Right lobe of liver (tissue), 6 donors: ENCODE measurements at regions of chr2 and their contacts with region 1.

Region 1: GRCh38 chr2:206981739-206982340 is 42.5 kb downstream of the CPO start:
- DNase-seq: peak; percentile 63 to 70 (median 67)
- ATAC-seq: peak; percentile 78 to 94 (median 92)
- H3K4me3 ChIP-seq: no peak overlapping the region
- H3K27ac ChIP-seq: no peak overlapping the region
- H3K4me1 ChIP-seq: peaks cover 0 to 5% (median 0%) of the 10 kb centered on the region in 4 donors
- H3K27me3 ChIP-seq: no peaks in the 10 kb centered on the region
- CTCF ChIP-seq: peak; percentile 58 to 78 (median 67)
- POLR2A ChIP-seq: no peak

Region 2: DNA sequence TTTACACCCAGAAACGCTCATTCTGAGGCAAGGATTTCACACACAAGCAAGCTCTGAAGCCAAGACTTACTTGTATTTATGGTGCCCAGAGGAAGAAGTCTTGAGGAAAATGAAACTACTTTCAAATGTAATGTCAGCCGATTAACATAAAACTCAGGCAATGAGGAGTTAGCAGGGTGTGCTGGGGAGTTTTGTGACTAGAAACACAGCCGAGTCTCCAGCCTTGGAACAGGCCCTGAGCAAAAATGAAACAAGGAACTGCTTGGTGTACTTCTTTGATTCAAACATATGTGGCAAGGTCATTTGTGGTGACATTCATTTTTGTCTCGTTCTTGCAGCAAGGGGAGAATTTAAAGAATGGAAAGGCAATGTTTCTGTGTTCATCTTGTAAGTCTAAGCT is 268.1 kb before region 1 on chr2:
- intact Hi-C with region 1: no loop called
- DNase-seq: no peak
- ATAC-seq: peak in 2 of 4 donors; percentile 27 to 37
- H3K4me3 ChIP-seq: no peak overlapping the region
- H3K27ac ChIP-seq: no peak overlapping the region
- H3K4me1 ChIP-seq: no peaks in the 10 kb centered on the region
- H3K27me3 ChIP-seq: no peaks in the 10 kb centered on the region
- CTCF ChIP-seq: no peak
- POLR2A ChIP-seq: no peak

Region 3: DNA sequence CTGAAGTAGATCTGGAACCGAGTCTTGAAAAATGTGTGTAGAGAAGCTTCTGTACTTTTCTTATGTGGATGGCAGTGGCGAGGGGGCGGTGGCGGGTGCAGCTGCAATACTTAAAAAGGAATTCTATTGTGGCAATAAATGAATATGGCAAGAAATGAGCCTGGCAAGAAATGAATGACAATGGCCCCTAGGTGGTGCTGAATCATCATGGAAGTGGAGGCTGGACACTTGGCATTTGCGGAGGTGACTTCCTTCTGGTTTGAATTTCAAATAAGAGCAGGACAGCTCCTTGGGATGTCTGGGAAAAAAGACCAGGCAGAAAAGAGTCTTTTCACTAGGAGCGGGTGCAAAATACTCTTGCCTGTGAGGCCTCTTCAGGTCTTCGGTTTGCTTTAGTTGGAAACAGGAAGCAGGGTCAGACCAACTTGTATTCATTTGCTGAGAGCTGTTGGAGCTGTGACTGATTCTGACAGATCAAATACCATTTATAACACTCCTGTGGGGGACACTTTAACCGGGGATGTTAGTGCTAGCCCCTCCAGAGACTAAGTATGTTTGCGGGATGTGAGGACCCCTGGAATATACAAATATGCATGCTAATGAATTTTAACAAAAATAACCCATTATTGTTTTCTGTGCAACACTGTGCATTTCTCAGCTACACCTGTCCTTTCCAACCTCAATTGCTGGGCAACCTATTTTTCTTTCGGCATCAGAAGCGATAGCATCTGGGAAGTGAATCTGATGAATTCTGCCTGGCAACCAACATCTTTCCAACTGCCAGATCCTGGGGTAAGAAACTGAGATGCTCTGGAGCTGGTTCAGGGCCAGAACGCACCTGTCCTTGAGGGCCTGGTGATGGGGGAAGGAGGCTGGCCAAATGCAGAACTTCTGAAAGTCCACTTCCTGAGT is 181.1 kb before region 1 on chr2:
- intact Hi-C with region 1: loop called in 1 of 2 experiments (anchors 10 kb)
- DNase-seq: peak in 2 of 3 donors; percentile 26 to 60
- ATAC-seq: peak; percentile 84 to 89 (median 86)
- H3K4me3 ChIP-seq: no peak overlapping the region
- H3K27ac ChIP-seq: no peak overlapping the region
- H3K4me1 ChIP-seq: no peaks in the 10 kb centered on the region
- H3K27me3 ChIP-seq: no peaks in the 10 kb centered on the region
- CTCF ChIP-seq: peak; percentile 67 to 72 (median 70)
- POLR2A ChIP-seq: no peak

Region 4: DNA sequence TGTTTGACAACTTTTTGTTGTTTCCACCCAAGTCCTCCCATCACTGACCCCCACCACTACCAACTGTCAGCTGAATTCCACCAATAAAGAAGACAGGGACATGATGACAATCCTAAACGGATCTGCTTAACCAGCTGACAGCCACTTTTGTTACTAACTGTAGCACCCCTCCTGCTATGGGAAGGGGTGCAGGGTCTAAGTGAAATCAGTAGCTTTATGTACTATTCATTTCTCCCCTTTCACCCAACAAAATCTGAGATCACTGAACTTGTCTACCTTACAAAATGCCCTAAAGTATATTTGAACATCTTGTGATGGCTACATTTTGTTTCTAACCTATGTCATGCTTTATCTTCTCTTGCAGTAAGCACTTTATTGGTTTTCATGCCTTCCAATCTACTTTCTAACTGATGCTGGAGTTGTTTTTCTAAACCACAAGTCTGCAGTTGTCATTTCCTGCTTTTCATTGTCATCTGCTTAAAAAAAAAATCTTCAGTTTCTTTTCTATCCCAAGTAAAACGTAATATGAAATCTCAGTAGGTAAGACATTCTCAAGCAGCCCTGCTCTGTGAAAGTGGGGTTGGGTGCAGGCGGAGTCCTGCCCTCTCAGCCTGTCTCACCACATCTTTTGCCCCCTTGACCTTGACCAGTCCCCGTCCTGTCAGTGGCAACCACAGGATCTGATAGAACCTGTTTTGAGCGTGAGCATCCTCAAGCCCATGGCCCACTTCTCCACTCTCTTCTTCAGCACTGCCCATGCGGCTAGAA is 122.7 kb before region 1 on chr2:
- intact Hi-C with region 1: no loop called
- DNase-seq: no peak
- ATAC-seq: no peak
- H3K4me3 ChIP-seq: no peak overlapping the region
- H3K27ac ChIP-seq: no peak overlapping the region
- H3K4me1 ChIP-seq: no peaks in the 10 kb centered on the region
- H3K27me3 ChIP-seq: no peaks in the 10 kb centered on the region
- CTCF ChIP-seq: no peak
- POLR2A ChIP-seq: no peak

Region 5: DNA sequence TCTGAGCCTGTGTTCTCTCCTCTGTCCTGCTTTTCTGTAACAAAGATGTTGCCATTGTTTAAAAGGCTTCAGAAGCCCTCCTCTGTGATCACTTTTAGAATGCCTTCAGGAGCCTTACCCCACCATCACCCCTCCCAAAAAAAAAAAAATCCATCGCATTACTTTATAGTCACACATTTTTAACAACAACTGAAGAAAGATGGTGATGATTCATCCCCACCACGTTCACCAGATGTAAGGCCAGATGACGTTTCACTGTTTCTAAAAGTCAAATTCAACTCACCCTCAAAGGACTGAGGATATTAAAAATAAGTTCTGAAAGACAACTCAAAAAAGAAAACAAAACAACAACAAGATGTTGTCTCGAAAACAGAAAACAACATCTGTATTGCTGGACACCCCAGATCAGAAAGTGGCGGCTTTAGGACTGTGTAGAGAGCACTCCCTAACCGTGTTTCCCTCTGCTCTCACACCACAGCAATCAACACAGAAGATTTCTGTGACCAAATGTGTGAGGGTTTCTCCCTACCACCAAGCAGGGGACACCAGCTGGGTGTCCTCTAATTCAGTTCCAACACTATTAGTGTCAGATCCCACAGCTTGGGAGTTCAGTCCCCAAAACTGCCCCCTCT is 486.0 kb after region 1 on chr2:
- intact Hi-C with region 1: loop called (anchors 5 to 10 kb)
- DNase-seq: no peak
- ATAC-seq: no peak
- H3K4me3 ChIP-seq: no peak overlapping the region
- H3K27ac ChIP-seq: no peak overlapping the region
- H3K4me1 ChIP-seq: no peaks in the 10 kb centered on the region
- H3K27me3 ChIP-seq: no peaks in the 10 kb centered on the region
- CTCF ChIP-seq: no peak
- POLR2A ChIP-seq: no peak

Region 6: DNA sequence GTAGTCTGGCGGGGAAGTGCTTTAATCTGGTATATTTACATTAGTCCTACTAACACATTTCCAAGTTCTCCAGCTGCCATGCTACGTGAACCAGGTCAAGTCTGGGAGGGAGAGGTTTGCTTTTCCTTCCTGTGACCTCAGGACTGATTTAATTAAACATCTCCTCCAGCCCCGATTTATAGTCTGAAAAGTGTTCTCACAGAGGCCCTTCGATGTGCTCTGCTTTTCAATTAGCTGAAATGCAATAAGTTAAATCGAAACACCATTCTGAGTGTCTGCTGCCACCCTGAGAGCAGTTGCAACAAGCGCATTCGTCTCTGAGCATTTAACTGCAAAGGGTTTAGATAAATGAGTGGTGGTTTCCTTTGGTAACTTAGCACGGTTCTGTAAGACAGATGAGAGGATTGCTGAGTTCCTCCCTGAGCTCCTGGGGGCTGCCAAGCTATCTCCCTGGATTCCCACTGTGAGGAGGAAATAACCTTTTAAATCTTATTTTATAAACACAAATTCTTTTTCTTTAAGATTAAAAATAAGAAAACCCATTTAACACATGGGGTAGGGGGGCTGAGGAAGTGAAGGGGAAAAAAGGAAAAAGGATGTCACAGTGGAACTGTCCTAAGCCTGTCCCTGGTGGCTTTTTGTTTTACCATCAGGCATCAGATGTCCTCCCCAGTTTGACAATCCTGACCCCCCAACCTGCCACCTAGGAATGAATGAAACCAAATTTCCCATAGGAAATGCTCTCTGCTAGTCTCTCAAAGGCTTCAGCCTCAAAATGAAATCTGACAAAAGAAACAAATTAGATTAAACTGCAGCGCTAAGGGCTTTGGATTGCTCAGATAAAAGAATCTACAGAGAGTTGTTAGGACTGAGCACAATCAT is 491.4 kb after region 1 on chr2:
- intact Hi-C with region 1: loop called (anchors 5 to 10 kb)
- DNase-seq: peak in 1 of 3 donors; percentile 25
- ATAC-seq: peak; percentile 83 to 93 (median 89)
- H3K4me3 ChIP-seq: peak overlapping the region in 1 of 3 donors; percentile 12
- H3K27ac ChIP-seq: peak overlapping the region in 1 of 3 donors; percentile 13
- H3K4me1 ChIP-seq: peaks cover 0 to 4% (median 0%) of the 10 kb centered on the region in 4 donors
- H3K27me3 ChIP-seq: no peaks in the 10 kb centered on the region
- CTCF ChIP-seq: peak; percentile 57 to 69 (median 62)
- POLR2A ChIP-seq: no peak